Activated T-helper 2 cell treated with anti-CD3 and anti-CD28 coated beads, Interferon-gamma antibody, Interleukin-2, Interleukin-4, amounts not matched to agents 10 μg/mL and 5 μg/mL and 100 μg/mL, durations not matched to agents 14 hours and 24 hours and 36 hours (primary cell): ENCODE measurements at regions of chr5 and their contacts with region 1.

Region 1: DNA sequence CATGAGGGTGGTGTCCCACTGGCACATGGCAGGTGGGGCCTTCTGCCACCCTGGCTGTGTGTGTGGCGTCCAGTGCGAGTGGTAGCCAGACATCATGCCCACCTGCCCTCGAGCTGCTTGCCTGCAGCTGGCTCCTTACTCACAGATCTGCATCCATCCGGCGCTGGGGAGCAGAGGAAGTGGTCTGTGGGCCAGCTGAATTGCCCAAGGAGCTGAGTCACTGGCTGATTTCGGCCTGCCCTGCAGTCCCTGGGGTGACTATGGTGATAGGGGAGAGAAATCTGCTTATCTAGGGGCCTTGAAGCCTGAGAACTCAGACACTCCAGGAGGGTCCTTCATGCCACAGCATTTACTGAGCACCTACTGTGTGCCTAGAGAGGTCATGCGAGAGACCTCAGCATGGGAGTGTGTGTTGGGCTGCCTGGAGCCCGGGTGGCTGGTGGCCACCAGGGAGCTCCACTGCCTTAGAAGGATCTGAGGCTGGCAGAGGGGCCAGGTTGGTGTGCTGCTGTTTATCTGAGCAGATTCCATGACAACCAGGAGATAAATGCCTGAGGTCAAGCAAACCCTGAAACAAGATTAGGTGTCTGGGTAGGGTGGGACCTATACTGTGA is 57.1 kb downstream of the SLC22A5 start:
- DNase-seq: peak; percentile 62
- H3K4me3 Mint-ChIP-seq: peak overlapping the region; percentile 67
- H3K27ac Mint-ChIP-seq: peak overlapping the region; percentile 96
- H3K4me1 Mint-ChIP-seq: peaks cover 94% of the 10 kb centered on the region
- H3K27me3 Mint-ChIP-seq: no peaks in the 10 kb centered on the region

Region 2: DNA sequence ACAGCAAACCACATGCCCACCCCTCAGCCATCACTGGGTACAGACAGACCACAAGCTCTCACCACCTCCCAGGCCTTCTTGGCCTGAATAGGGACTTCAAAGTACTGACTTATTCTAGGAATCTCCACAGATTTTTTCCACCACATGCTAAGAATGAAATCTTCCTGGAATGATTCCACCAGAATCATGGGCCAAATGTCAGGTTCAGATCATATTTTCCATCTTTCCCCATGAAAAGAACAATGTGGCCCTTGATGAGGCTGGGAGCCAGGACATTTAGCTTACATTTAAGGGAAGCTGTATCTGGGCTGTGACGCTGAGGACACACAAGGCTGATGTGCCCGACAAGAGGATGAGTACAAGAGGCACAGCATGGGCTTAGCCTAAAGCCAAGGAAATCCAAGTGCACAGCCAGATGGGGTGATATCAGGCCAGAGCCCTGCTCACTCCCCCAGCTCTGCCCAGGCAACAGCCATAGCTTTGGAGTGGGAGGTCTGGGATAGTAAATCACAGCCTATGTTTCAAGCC is 443.3 kb before region 1 on chr5:
- intact Hi-C with region 1: no loop called
- DNase-seq: no peak
- H3K4me3 Mint-ChIP-seq: no peak overlapping the region
- H3K27ac Mint-ChIP-seq: no peak overlapping the region
- H3K4me1 Mint-ChIP-seq: peaks cover 5% of the 10 kb centered on the region
- H3K27me3 Mint-ChIP-seq: peaks cover 13% of the 10 kb centered on the region

Region 3: GRCh38 chr5:132103332-132103951 is 323.2 kb before region 1 on chr5:
- intact Hi-C with region 1: loop called (anchors 1 kb)
- DNase-seq: peak; percentile 81
- H3K4me3 Mint-ChIP-seq: peak overlapping the region; percentile 47
- H3K27ac Mint-ChIP-seq: peak overlapping the region; percentile 99
- H3K4me1 Mint-ChIP-seq: peaks cover 79% of the 10 kb centered on the region
- H3K27me3 Mint-ChIP-seq: no peaks in the 10 kb centered on the region

Region 4: GRCh38 chr5:132180134-132180745 is 246.4 kb before region 1 on chr5:
- intact Hi-C with region 1: no loop called
- DNase-seq: no peak
- H3K4me3 Mint-ChIP-seq: peak overlapping the region; percentile 19
- H3K27ac Mint-ChIP-seq: peak overlapping the region; percentile 85
- H3K4me1 Mint-ChIP-seq: peaks cover 44% of the 10 kb centered on the region
- H3K27me3 Mint-ChIP-seq: no peaks in the 10 kb centered on the region

Region 5: GRCh38 chr5:132410451-132411381 is 15.9 kb before region 1 on chr5:
- intact Hi-C with region 1: loop called (anchors 2 kb)
- DNase-seq: peak; percentile 88
- H3K4me3 Mint-ChIP-seq: peak overlapping the region; percentile 98
- H3K27ac Mint-ChIP-seq: peak overlapping the region; percentile 99
- H3K4me1 Mint-ChIP-seq: peaks cover 54% of the 10 kb centered on the region
- H3K27me3 Mint-ChIP-seq: peaks cover under 1% of the 10 kb centered on the region

Region 6: GRCh38 chr5:132456296-132457001 is 29.8 kb after region 1 on chr5:
- intact Hi-C with region 1: loop called (anchors 1 kb)
- DNase-seq: peak; percentile 54
- H3K4me3 Mint-ChIP-seq: peak overlapping the region; percentile 45
- H3K27ac Mint-ChIP-seq: peak overlapping the region; percentile 97
- H3K4me1 Mint-ChIP-seq: peaks cover 82% of the 10 kb centered on the region
- H3K27me3 Mint-ChIP-seq: no peaks in the 10 kb centered on the region

Region 7: DNA sequence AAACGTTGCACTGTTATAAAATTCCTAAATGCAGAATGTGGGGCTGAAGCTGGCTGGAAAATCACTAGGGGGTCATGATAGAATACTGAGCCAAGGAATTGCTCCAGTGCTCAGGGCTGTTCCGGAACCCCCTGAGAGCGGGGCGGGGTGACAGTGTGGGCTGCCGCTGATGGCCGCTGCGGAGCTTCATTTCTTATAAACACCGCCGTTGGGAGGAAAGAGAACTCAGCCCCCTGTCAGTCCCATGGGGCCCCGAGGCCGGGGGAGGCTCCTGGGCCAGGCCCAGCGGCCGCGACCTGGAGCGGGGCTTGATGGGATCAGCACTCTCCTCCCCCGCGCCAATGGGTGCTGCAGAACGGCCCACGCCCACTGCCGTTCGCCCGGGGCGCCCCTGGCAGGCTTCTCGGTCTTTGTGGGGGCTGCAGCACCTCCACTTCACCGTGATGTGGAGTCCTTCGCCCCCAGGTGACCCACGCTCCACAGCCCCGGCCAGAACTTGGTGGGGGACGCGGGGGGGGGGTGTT is 69.1 kb after region 1 on chr5:
- intact Hi-C with region 1: loop called (anchors 1 kb)
- DNase-seq: peak; percentile 74
- H3K4me3 Mint-ChIP-seq: peak overlapping the region; percentile 88
- H3K27ac Mint-ChIP-seq: peak overlapping the region; percentile 91
- H3K4me1 Mint-ChIP-seq: peaks cover 56% of the 10 kb centered on the region
- H3K27me3 Mint-ChIP-seq: no peaks in the 10 kb centered on the region

Region 8: GRCh38 chr5:132776131-132776937 is 349.7 kb after region 1 on chr5:
- intact Hi-C with region 1: no loop called
- DNase-seq: no peak
- H3K4me3 Mint-ChIP-seq: peak overlapping the region; percentile 61
- H3K27ac Mint-ChIP-seq: no peak overlapping the region
- H3K4me1 Mint-ChIP-seq: peaks cover 25% of the 10 kb centered on the region
- H3K27me3 Mint-ChIP-seq: peaks cover 55% of the 10 kb centered on the region